ENCODE measurements at regions of chr14 and their contacts with region 1.

Region 1: DNA sequence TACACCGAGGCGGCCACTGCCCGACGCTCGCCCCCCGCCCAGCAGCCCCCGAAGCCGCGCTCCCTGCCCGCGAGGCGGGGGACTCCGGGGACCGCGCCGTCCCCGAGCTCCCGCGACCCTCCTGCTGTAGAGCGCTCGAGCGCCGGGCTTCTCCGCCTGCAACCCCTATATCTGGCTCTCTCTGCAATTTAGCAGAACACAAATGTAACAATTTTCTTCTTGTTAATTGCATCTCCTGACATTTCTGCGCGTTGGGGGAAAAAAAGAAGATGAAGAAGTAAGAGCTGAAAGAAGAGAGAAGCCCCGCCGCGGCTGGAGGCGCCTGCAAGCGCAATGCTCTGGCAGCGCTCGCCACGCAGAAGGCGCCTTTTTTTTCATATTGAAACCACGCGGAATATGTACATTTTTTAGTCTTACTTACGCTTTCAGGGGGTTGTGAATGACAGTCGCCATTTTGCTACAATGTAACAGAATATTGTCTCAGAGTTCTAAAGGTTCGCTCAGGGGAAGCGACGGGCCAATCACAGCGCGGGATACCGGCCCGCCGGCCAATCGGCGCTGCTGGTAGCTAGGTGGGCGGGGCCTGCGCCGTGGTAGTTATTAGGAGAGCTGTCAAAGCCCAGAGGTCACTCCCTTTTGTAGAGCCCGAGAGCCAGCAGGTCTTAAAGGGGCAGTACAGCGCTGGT is at the start of gene DPF3:
- DNase-seq: peak; percentile 98
- H3K4me3 Mint-ChIP-seq: peak within 1 kb of the TSS; percentile 90
- H3K27ac Mint-ChIP-seq: peak within 1 kb of the TSS; percentile 27
- H3K4me1 Mint-ChIP-seq: peaks cover 26% of the 10 kb centered on the region
- H3K27me3 Mint-ChIP-seq: peaks cover 52% of the 10 kb centered on the region
- total RNA-seq, gene DPF3: 1.5 and 2.8 TPM in 2 replicates

Region 2: DNA sequence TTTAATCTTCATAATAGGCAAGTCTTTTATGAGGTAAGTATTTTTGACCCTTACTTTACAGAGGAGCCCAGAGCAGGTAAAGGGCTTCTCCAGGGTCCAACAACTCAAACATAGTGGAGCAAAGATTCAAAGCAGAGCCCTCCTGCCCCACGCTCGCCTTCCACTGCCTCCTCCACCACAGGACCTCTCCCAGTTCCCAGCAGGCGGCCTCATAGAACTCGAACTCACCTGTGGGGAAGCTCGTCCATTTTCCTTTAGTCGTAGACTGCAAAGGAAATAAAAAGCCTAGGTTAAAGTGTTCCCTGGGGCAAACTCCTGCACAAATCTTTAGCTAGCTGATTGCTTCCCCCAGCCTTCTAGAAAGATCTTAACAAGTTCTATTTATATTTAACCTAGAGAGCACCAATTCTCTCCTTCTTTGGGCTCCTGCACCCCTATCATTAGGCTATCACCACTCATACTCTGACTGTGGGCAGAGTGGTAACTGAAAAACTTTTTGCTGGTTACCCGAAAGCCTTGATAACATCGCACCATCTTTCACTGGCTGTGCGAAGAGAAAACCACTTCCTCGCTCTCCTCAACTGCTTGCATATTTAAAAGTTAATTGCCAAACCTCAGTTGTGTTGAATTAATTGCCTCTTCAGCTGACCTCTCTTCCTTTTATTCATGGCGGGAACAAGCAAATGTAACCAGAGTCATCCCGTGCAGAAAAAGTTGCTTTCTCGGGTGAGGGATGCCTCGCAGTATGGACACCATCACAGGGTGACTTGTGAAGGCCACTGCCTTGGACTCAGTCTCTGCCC is 299.5 kb before region 1 on chr14:
- intact Hi-C with region 1: loop called (anchors 5 kb)
- DNase-seq: peak; percentile 90
- H3K4me3 Mint-ChIP-seq: peak overlapping the region; percentile 74
- H3K27ac Mint-ChIP-seq: peak overlapping the region; percentile 51
- H3K4me1 Mint-ChIP-seq: peaks cover 47% of the 10 kb centered on the region
- H3K27me3 Mint-ChIP-seq: peaks cover 24% of the 10 kb centered on the region

Region 3: DNA sequence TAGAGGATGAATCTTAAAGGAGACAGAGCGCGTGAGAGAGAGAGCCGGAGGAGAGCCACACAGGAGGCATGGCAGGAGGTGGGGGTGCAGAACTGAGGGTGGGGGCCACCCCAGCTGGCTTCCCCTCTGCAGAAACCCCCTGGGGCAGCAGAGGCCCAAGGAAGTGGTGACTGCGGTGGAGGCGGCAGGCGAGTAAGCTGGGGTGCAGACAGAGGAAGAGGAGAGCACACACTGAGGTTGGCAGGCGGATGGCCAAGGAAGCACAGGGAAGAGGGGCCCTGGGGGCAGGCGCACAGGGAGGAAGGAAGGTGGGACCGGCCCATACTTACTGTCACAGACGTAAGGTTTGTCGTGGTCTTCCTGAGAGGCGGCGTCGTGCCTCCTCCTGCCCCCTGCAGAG is 179.7 kb before region 1 on chr14:
- intact Hi-C with region 1: loop called (anchors 5 kb)
- DNase-seq: peak; percentile 84
- H3K4me3 Mint-ChIP-seq: peak overlapping the region; percentile 73
- H3K27ac Mint-ChIP-seq: peak overlapping the region; percentile 73
- H3K4me1 Mint-ChIP-seq: peaks cover 43% of the 10 kb centered on the region
- H3K27me3 Mint-ChIP-seq: peaks cover 7% of the 10 kb centered on the region

Region 4: GRCh38 chr14:72812292-72812911 is 81.4 kb before region 1 on chr14:
- intact Hi-C with region 1: loop called (anchors 2 kb)
- DNase-seq: no peak
- H3K4me3 Mint-ChIP-seq: no peak overlapping the region
- H3K27ac Mint-ChIP-seq: no peak overlapping the region
- H3K4me1 Mint-ChIP-seq: peaks cover 33% of the 10 kb centered on the region
- H3K27me3 Mint-ChIP-seq: no peaks in the 10 kb centered on the region

Region 5: GRCh38 chr14:72876710-72877063 is 17.1 kb before region 1 on chr14:
- intact Hi-C with region 1: no loop called
- DNase-seq: no peak
- H3K4me3 Mint-ChIP-seq: no peak overlapping the region
- H3K27ac Mint-ChIP-seq: no peak overlapping the region
- H3K4me1 Mint-ChIP-seq: peaks cover 16% of the 10 kb centered on the region
- H3K27me3 Mint-ChIP-seq: peaks cover 2% of the 10 kb centered on the region

Region 6: DNA sequence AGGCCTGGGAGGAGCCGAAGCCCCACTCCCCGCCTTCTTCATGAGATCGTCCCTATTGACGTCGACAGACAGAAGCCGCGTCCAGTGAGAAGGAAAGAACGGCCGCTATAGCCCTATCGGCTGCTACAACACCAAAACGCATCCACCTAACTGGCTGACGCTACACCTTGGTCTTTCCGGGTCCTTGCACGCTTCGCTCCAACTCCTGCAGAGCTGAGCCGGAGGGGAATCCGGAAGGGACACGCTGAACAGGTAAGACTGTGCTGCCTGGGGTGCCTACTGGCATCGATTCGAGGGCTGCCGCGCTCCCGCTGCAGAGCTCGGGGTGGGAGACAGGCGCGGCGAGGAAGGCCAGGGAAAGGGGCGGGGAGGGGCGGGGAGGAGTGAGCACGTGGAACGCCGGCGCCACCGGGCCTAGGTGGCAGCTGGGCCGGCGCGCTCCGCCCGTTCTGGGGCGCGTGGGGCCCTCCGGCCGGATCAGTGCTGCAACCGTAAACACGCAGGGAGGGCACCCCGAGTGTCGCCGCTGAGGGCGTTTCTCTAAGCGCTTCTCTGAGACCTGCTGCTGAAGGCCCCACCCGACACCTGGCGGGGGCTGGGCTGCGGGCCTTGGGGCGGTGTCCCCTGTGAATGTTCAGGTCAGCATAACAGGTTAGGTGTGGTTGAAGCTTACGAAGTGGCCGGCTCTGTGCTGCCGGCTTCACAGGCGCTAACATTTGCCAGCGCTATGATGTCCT is 32.7 kb after region 1 on chr14 and contains the start of gene DCAF4:
- intact Hi-C with region 1: loop called (anchors 1 kb)
- DNase-seq: peak; percentile 98
- H3K4me3 Mint-ChIP-seq: peak within 1 kb of the TSS; percentile 87
- H3K27ac Mint-ChIP-seq: peak within 1 kb of the TSS; percentile 93
- H3K4me1 Mint-ChIP-seq: peaks cover 11% of the 10 kb centered on the region
- H3K27me3 Mint-ChIP-seq: peaks cover 13% of the 10 kb centered on the region
- total RNA-seq, gene DCAF4: 20.2 and 21.6 TPM in 2 replicates

Region 7: GRCh38 chr14:73116079-73116665 is 222.4 kb after region 1 on chr14:
- intact Hi-C with region 1: no loop called
- DNase-seq: peak; percentile 40
- H3K4me3 Mint-ChIP-seq: no peak overlapping the region
- H3K27ac Mint-ChIP-seq: no peak overlapping the region
- H3K4me1 Mint-ChIP-seq: peaks cover 8% of the 10 kb centered on the region
- H3K27me3 Mint-ChIP-seq: no peaks in the 10 kb centered on the region

Measured in activated CD4-positive, alpha-beta T cell treated with anti-CD3 and anti-CD28 coated beads, Interleukin-2, amount 10 ng/mL, durations not matched to agents 24 days and 14 days (primary cell).